Esophagus muscularis mucosa (tissue), 4 donors: ENCODE measurements at regions of chr11 and their contacts with region 1.

Region 1: GRCh38 chr11:85941380-85941973 is 86.3 kb downstream of the CCDC83 start:
- DNase-seq: no peak
- H3K4me3 ChIP-seq: no peak overlapping the region
- H3K27ac ChIP-seq: no peak overlapping the region
- H3K4me1 ChIP-seq: peaks cover 1 to 8% (median 4%) of the 10 kb centered on the region in 4 donors
- H3K27me3 ChIP-seq: no peaks in the 10 kb centered on the region
- CTCF ChIP-seq: peak; percentile 62 to 79 (median 66)
- EP300 ChIP-seq: no peak
- POLR2A ChIP-seq: no peak

Region 2: DNA sequence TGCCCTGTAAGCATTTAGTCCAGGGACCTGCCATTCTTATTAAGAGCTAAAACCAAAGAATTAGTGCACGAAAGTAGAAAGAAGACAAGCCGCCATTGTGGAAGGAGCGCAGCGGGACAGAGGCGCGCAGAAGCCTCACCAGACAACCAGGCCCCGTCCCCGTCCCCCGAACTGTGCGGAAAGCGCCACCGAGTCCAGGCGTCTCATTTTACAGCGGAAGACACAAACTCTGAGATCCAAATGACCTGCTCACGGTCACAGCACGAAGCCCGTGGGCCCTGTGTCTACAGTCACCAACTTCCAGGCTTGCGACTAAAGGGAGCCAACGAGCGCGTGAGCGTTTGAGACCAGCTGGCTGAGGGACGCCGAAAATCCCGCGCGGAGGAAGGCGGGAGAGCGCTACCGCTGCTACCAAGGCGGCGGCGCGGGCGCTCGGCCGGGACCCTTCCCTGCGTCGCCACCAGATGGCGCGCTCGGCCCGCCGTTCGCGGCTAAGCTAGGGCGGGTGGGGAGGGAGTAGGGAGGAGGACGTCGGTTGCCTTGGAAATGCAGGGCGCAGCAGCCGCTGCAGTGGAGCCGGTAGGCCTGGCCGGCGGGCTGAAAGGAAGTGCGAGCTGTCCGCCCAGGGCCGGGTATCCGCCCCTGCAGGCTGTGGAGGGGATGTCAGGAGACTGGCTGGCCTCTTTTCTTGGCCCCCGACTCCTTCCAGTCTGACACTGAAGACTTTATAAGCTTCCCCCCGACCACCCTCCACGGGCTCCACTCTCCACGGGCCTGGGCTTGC is 86.7 kb before region 1 on chr11:
- intact Hi-C with region 1: loop called (anchors 5 kb)
- DNase-seq: peak; percentile 96
- H3K4me3 ChIP-seq: peak overlapping the region; percentile 57 to 64 (median 59)
- H3K27ac ChIP-seq: peak overlapping the region; percentile 75 to 82 (median 80)
- H3K4me1 ChIP-seq: peaks cover 7 to 14% (median 8%) of the 10 kb centered on the region in 4 donors
- H3K27me3 ChIP-seq: no peaks in the 10 kb centered on the region
- CTCF ChIP-seq: peak; percentile 95 to 99 (median 97)
- EP300 ChIP-seq: no peak
- POLR2A ChIP-seq: no peak

Region 3: GRCh38 chr11:86218125-86219084 is 276.9 kb after region 1 on chr11:
- intact Hi-C with region 1: loop called (anchors 5 kb)
- DNase-seq: no peak
- H3K4me3 ChIP-seq: peak overlapping the region; percentile 19 to 45 (median 28)
- H3K27ac ChIP-seq: no peak overlapping the region
- H3K4me1 ChIP-seq: peaks cover 3 to 11% (median 9%) of the 10 kb centered on the region in 4 donors
- H3K27me3 ChIP-seq: no peaks in the 10 kb centered on the region
- CTCF ChIP-seq: peak; percentile 87 to 97 (median 88)
- EP300 ChIP-seq: no peak
- POLR2A ChIP-seq: no peak

Region 4: DNA sequence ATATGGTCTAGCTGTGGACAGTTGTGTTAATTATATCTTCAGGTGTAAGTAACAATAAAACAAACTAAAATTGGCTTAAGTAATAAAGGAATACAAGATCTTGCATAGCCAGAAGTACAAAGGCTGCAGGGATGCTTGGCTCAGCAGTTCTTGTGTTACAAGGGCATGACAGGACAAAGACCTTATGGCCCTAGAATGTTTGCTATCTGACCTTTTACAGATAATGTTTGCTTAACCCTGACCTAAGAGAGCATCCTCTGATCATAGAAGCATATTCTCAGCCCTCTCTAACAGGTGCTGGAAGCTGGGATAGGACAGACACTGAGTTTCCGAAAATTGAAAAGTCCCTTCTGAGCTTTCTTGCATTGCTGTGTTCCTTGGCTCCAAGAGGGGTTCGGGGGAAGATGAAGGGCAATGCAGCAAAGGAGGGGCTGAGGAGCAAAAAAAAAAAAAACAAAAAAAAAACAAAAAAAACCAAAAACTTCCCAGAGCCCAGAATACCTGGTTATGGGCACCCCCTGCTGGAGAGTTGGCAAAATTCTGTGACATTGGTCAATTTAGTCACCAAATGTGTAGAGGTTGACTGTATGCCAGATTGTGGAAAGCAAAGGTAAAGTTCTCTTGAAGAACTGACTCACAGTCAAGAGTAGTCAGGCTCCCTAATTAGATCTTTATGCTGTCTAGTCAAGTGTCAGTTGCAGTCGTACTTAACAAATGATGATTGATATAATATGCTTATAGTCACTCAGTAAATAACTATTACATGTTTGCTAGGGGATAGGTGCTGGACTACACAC is 350.2 kb after region 1 on chr11:
- intact Hi-C with region 1: loop called (anchors 5 kb)
- DNase-seq: no peak
- H3K4me3 ChIP-seq: no peak overlapping the region
- H3K27ac ChIP-seq: no peak overlapping the region
- H3K4me1 ChIP-seq: peaks cover 0 to 2% (median 0%) of the 10 kb centered on the region in 4 donors
- H3K27me3 ChIP-seq: no peaks in the 10 kb centered on the region
- CTCF ChIP-seq: peak; percentile 32 to 64 (median 38)
- EP300 ChIP-seq: no peak
- POLR2A ChIP-seq: no peak